Activated CD4-positive, alpha-beta T cell treated with anti-CD3 and anti-CD28 coated beads for 36 hours (primary cell): ENCODE measurements at regions of chr20 and their contacts with region 1.

Region 1: DNA sequence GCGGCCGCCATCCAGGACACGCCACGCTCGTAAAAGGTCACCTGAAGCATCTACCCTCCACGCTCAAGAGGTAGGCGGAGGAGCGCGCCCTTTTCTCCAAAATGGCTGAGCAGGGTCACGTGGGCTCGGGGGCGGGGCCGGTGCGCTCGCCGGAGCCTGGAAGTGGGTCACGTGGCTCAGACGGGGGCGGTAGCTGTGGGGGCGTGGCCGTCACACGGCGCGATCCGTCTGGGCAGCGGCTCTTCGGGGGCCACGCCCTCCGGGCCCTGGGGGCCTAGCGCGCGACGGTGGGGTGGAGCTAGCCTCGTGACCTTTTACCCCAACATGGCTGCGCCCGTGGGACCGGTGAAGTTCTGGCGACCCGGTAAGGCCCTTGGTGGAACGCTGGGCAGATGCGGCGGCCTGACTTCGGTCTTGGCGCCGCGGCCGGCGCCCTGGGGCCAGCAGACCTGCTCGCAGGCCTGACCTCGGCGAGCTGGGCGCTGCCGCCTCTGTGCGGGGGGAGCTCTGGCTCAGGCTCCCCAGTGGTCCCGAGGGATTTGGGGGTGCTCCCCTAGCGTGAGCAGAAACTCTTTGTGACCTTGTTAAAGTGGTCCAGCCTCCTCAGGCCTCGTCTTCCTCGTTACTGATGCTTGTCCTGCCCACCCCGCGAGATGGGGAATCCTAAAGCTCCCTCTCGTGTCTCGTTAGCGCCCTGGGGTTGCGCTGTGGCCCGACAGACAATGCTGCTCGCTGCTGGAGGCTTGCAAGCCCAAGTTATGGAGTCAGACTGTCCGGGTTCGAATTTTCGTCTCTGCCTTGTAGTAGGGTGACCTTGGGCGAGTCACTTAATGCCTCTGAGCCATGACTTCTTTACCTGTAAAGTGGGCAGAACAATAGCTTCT is at the start of gene DHX35:
- DNase-seq: peak; percentile 99
- ATAC-seq: peak; percentile 99
- H3K4me3 Mint-ChIP-seq: peak within 1 kb of the TSS; percentile 94
- H3K27ac Mint-ChIP-seq: peak within 1 kb of the TSS; percentile 95
- H3K4me1 Mint-ChIP-seq: peaks cover 29% of the 10 kb centered on the region
- H3K27me3 Mint-ChIP-seq: no peaks in the 10 kb centered on the region
- total RNA-seq, gene DHX35: 8.7 to 12.0 TPM

Region 2: GRCh38 chr20:38472513-38473372 is 489.5 kb before region 1 on chr20 and contains the start of gene RALGAPB:
- CTCF ChIA-PET with region 1: no interaction called
- POLR2A ChIA-PET with region 1: interaction called, 4 read pairs
- intact Hi-C with region 1: loop called in 1 of 2 experiments (anchors 1 kb)
- DNase-seq: peak; percentile 99
- ATAC-seq: peak; percentile 96
- H3K4me3 Mint-ChIP-seq: peak within 1 kb of the TSS; percentile 85
- H3K27ac Mint-ChIP-seq: peak within 1 kb of the TSS; percentile 79
- H3K4me1 Mint-ChIP-seq: peaks cover 38% of the 10 kb centered on the region
- H3K27me3 Mint-ChIP-seq: no peaks in the 10 kb centered on the region
- total RNA-seq, gene RALGAPB: 23.5 to 27.1 TPM

Region 3: GRCh38 chr20:38674092-38674764 is 288.1 kb before region 1 on chr20:
- CTCF ChIA-PET with region 1: no interaction called
- POLR2A ChIA-PET with region 1: no interaction called
- intact Hi-C with region 1: loop called in 1 of 2 experiments (anchors 1 kb)
- DNase-seq: peak; percentile 84
- ATAC-seq: peak; percentile 91
- H3K4me3 Mint-ChIP-seq: peak overlapping the region; percentile 63
- H3K27ac Mint-ChIP-seq: peak overlapping the region; percentile 49
- H3K4me1 Mint-ChIP-seq: peaks cover 5% of the 10 kb centered on the region
- H3K27me3 Mint-ChIP-seq: peaks cover 12% of the 10 kb centered on the region

Region 4: DNA sequence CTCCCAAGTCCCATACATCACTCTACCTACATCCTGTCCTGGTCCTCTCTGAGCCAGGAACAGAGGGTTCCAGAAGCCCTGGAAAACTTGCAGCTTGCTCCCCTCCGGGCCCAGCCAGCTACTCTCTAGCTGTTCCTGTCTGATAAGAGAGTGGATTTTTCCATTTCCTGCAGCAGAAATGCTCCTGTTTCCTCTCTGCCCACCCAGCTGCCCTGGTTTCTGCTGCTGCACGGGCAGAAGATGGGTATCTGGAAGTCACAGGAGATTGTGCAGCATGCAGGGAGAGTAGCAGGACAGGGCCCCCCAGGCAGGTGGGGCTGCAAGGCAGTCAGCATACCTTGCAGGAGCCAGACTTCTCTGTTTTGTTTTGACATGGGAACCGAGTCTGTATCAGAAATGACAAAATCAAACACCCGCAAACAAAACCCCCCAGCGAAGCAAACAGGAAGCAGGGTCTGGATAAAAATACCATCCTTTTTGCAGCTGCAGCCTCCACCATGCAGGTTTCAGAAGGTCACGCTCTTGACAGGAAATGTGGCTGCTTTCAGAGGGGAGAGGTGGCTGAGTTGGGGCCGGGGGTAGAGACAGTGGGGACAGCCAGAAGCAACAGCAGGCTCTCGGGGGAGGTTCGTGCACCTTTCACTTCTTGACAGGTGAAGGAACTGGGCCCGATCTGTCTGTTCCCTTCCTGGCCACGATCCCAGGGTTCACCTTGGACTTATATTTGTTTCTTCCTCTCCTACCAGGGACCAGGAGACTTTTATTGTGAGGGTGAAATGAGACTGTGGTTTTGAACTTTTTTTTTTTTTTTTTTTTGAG is 86.9 kb before region 1 on chr20:
- CTCF ChIA-PET with region 1: no interaction called
- POLR2A ChIA-PET with region 1: no interaction called
- intact Hi-C with region 1: loop called in 1 of 2 experiments (anchors 1 kb)
- DNase-seq: peak; percentile 65
- ATAC-seq: peak; percentile 17
- H3K4me3 Mint-ChIP-seq: peak overlapping the region; percentile 63
- H3K27ac Mint-ChIP-seq: peak overlapping the region; percentile 96
- H3K4me1 Mint-ChIP-seq: peaks cover 89% of the 10 kb centered on the region
- H3K27me3 Mint-ChIP-seq: no peaks in the 10 kb centered on the region

Region 5: DNA sequence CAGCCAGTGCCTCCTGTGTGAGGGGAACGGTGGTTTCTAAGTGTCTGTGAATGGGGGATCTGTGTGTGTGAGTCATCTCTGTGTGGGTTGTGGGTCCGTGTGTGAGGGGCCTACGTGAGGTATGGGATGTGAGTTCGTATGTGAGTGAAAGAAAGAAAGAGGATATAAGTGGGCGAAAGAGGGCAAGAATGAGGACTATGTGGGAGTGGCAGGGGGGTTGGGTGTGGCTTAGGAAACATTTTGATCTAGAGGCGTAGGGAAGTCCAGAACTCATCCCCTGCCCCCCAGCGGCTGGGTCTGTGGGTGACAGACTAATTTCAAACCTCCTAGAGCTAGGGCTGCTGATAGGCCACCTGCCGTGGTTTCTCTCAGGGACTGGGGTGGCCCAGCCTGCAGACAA is 35.3 kb after region 1 on chr20:
- CTCF ChIA-PET with region 1: interaction called, 12 read pairs
- POLR2A ChIA-PET with region 1: interaction called, 5 read pairs
- intact Hi-C with region 1: loop called in 1 of 2 experiments (anchors 1 kb)
- DNase-seq: peak; percentile 83
- ATAC-seq: peak; percentile 89
- H3K4me3 Mint-ChIP-seq: no peak overlapping the region
- H3K27ac Mint-ChIP-seq: peak overlapping the region; percentile 19
- H3K4me1 Mint-ChIP-seq: peaks cover 28% of the 10 kb centered on the region
- H3K27me3 Mint-ChIP-seq: no peaks in the 10 kb centered on the region

Region 6: GRCh38 chr20:39049684-39050554 is 87.6 kb after region 1 on chr20:
- CTCF ChIA-PET with region 1: interaction called, 16 read pairs
- POLR2A ChIA-PET with region 1: no interaction called
- intact Hi-C with region 1: loop called in 1 of 2 experiments (anchors 1 kb)
- DNase-seq: peak; percentile 86
- ATAC-seq: peak; percentile 83
- H3K4me3 Mint-ChIP-seq: peak overlapping the region; percentile 68
- H3K27ac Mint-ChIP-seq: peak overlapping the region; percentile 48
- H3K4me1 Mint-ChIP-seq: peaks cover 5% of the 10 kb centered on the region
- H3K27me3 Mint-ChIP-seq: peaks cover 3% of the 10 kb centered on the region